Left colon (tissue), 2 donors: ENCODE measurements at regions of chr3 and their contacts with region 1.

Region 1: GRCh38 chr3:176939022-176939817 is 258.1 kb downstream of the TBL1XR1 start:
- DNase-seq: peak in 1 of 2 donors; percentile 33
- ATAC-seq: peak; percentile 91

Region 2: GRCh38 chr3:176514297-176514696 is 424.9 kb before region 1 on chr3:
- intact Hi-C with region 1: loop called in 1 of 2 experiments (anchors 10 kb)
- DNase-seq: peak in 1 of 2 donors; percentile 5
- ATAC-seq: no peak

Region 3: DNA sequence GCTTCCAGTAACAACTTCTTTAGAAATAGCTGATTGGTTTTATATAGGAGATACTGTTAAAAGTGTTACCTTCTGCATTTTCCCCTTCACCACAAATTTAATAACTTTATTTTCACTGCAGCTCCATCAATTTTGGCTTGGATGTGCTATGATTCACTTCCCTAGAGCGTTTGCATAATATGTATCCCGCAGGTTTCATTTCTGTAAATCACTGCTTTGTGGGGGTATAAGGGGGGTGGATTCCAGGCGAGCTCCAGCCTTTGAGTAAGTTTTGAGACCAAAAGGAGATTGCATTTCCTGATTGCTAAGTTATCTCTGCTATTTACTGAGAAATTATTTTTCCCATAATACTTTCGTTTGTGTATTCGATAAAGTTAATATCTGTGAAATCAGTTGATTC is 25.4 kb after region 1 on chr3:
- intact Hi-C with region 1: no loop called
- DNase-seq: no peak
- ATAC-seq: no peak